ENCODE measurements at regions of chr11 and their contacts with region 1.

Region 1: GRCh38 chr11:64225612-64226506 is at the starts of genes NUDT22 and TRPT1:
- DNase-seq: peak; percentile 94
- H3K4me3 Mint-ChIP-seq: peak within 1 kb of the TSS; percentile 88
- H3K27ac Mint-ChIP-seq: peak within 1 kb of the TSS; percentile 79
- H3K4me1 Mint-ChIP-seq: peaks cover 40% of the 10 kb centered on the region
- H3K27me3 Mint-ChIP-seq: no peaks in the 10 kb centered on the region
- total RNA-seq, gene NUDT22: 84.8 to 90.6 TPM
- total RNA-seq, gene TRPT1: 34.7 to 35.3 TPM

Region 2: GRCh38 chr11:64094463-64095260 is 131.2 kb before region 1 on chr11:
- CTCF ChIA-PET with region 1: no interaction called
- POLR2A ChIA-PET with region 1: no interaction called
- DNase-seq: no peak
- H3K4me3 Mint-ChIP-seq: no peak overlapping the region
- H3K27ac Mint-ChIP-seq: no peak overlapping the region
- H3K4me1 Mint-ChIP-seq: peaks cover 12% of the 10 kb centered on the region
- H3K27me3 Mint-ChIP-seq: no peaks in the 10 kb centered on the region

Region 3: GRCh38 chr11:64156235-64157011 is 69.4 kb before region 1 on chr11:
- CTCF ChIA-PET with region 1: no interaction called
- POLR2A ChIA-PET with region 1: no interaction called
- DNase-seq: no peak
- H3K4me3 Mint-ChIP-seq: no peak overlapping the region
- H3K27ac Mint-ChIP-seq: no peak overlapping the region
- H3K4me1 Mint-ChIP-seq: no peaks in the 10 kb centered on the region
- H3K27me3 Mint-ChIP-seq: peaks cover 3% of the 10 kb centered on the region

Region 4: DNA sequence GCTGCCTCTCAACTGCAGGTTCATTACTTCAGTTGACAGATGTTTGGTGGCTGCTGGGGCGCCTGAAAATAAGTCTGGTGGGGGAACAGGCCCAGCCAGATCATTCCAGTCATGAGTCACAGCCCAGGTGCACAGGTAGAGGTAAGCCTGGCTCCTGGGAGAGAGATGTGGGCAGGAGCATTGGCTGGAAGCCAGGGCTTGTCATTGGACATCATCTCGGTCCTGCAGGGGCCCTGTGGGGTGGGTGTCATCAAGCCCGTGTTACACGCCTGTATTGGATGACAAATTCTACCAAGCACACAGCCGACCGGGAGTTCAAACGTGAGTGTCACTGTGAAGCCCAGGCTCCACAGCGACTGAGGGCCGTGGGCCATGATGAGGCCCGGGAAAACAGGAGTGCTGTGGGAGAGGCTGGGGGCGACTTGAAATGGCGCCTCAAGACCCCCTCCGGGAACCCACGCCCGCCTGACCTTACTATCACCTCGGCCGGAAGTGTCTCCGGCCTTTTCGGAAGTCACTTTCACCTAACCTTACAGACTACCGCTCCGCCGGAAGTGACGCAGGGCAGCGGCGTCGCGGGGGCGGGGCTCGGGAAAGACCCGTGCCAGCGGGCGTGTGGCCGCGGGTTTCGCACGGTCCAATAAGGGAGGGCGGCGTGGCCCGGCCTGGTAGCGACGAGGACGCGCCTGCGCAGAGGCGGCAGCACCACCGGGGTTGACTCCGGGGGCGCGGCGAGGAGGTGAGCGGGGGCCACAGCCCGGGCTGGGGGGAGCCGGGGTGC is 14.7 kb after region 1 on chr11 and contains the start of gene FKBP2:
- CTCF ChIA-PET with region 1: interaction called, 7 read pairs
- POLR2A ChIA-PET with region 1: interaction called, 49 read pairs
- DNase-seq: peak; percentile 98
- H3K4me3 Mint-ChIP-seq: peak within 1 kb of the TSS; percentile 90
- H3K27ac Mint-ChIP-seq: peak within 1 kb of the TSS; percentile 92
- H3K4me1 Mint-ChIP-seq: peaks cover 52% of the 10 kb centered on the region
- H3K27me3 Mint-ChIP-seq: no peaks in the 10 kb centered on the region
- total RNA-seq, gene FKBP2: 26.4 to 27.9 TPM